ENCODE measurements at regions of chr2 and their contacts with region 1.

Region 1: GRCh38 chr2:230798769-230799399 is 65.9 kb upstream of the ITM2C start:
- DNase-seq: peak in 1 of 2 donors; percentile 80
- ATAC-seq: peak; percentile 30 to 48 (median 46)
- H3K4me3 ChIP-seq: no peak overlapping the region
- H3K4me3 Mint-ChIP-seq: no peak overlapping the region
- H3K27ac ChIP-seq: no peak overlapping the region
- H3K27ac Mint-ChIP-seq: no peak overlapping the region
- H3K4me1 ChIP-seq: peaks cover 18% of the 10 kb centered on the region
- H3K4me1 Mint-ChIP-seq: peaks cover 22 to 24% of the 10 kb centered on the region in 2 donors
- H3K27me3 ChIP-seq: no peaks in the 10 kb centered on the region
- H3K27me3 Mint-ChIP-seq: no peaks in the 10 kb centered on the region
- CTCF ChIP-seq: peak; percentile 78

Region 2: GRCh38 chr2:229943770-229944449 is 855.0 kb before region 1 on chr2:
- intact Hi-C with region 1: no loop called
- DNase-seq: no peak
- ATAC-seq: no peak
- H3K4me3 ChIP-seq: no peak overlapping the region
- H3K4me3 Mint-ChIP-seq: no peak overlapping the region
- H3K27ac ChIP-seq: no peak overlapping the region
- H3K27ac Mint-ChIP-seq: no peak overlapping the region
- H3K4me1 ChIP-seq: no peaks in the 10 kb centered on the region
- H3K4me1 Mint-ChIP-seq: no peaks in the 10 kb centered on the region
- H3K27me3 ChIP-seq: no peaks in the 10 kb centered on the region
- H3K27me3 Mint-ChIP-seq: no peaks in the 10 kb centered on the region
- CTCF ChIP-seq: no peak

Region 3: GRCh38 chr2:230602562-230603230 is 196.2 kb before region 1 on chr2:
- intact Hi-C with region 1: no loop called
- DNase-seq: peak in 1 of 2 donors; percentile 79
- ATAC-seq: peak; percentile 81 to 85 (median 83)
- H3K4me3 ChIP-seq: no peak overlapping the region
- H3K4me3 Mint-ChIP-seq: peak overlapping the region; percentile 67
- H3K27ac ChIP-seq: peak overlapping the region; percentile 84
- H3K27ac Mint-ChIP-seq: peak overlapping the region; percentile 82 to 90
- H3K4me1 ChIP-seq: peaks cover 39% of the 10 kb centered on the region
- H3K4me1 Mint-ChIP-seq: peaks cover 34 to 49% of the 10 kb centered on the region in 2 donors
- H3K27me3 ChIP-seq: no peaks in the 10 kb centered on the region
- H3K27me3 Mint-ChIP-seq: no peaks in the 10 kb centered on the region
- CTCF ChIP-seq: no peak

Region 4: DNA sequence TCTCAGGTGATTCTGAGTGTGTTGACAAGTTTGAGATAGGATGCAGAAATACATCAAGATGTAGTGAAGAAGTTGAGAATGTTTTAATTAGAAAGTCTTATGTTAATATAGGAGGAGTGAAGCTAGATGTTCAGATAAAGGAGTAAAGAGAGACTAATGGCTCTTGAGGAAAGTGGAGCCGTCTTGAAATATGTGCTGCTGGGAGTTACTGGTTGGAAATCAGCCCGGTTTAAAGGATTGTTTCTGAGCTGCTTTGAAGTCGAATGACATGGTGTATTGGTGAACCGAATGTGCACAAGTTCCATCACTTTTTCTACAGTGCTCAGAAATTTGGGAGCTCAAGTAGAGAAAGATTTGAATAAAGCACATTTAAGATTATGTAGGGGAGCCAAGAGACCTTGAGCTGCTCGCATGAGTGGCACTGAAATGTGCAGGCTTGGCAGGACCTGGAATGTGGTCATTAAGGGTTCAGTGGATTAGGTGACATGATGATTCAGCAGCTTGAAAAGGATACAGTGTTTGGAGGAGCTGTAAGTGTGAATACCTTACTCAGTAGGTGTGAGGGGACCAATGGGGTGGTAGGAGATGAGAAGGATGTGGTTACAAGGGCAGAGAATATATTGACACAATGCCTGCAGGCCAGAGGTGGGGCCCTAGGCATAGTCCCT is 17.6 kb before region 1 on chr2:
- intact Hi-C with region 1: loop called (anchors 1 kb)
- DNase-seq: peak; percentile 51 to 76
- ATAC-seq: peak; percentile 91 to 96 (median 93)
- H3K4me3 ChIP-seq: no peak overlapping the region
- H3K4me3 Mint-ChIP-seq: peak overlapping the region; percentile 67
- H3K27ac ChIP-seq: no peak overlapping the region
- H3K27ac Mint-ChIP-seq: peak overlapping the region; percentile 54 to 67
- H3K4me1 ChIP-seq: peaks cover 46% of the 10 kb centered on the region
- H3K4me1 Mint-ChIP-seq: peaks cover 69 to 82% of the 10 kb centered on the region in 2 donors
- H3K27me3 ChIP-seq: no peaks in the 10 kb centered on the region
- H3K27me3 Mint-ChIP-seq: no peaks in the 10 kb centered on the region
- CTCF ChIP-seq: no peak

Region 5: GRCh38 chr2:230847883-230848388 is 49.1 kb after region 1 on chr2:
- intact Hi-C with region 1: no loop called
- DNase-seq: peak; percentile 83 to 90
- ATAC-seq: peak; percentile 76 to 96 (median 95)
- H3K4me3 ChIP-seq: no peak overlapping the region
- H3K4me3 Mint-ChIP-seq: no peak overlapping the region
- H3K27ac ChIP-seq: no peak overlapping the region
- H3K27ac Mint-ChIP-seq: no peak overlapping the region
- H3K4me1 ChIP-seq: peaks cover 7% of the 10 kb centered on the region
- H3K4me1 Mint-ChIP-seq: peaks cover 10 to 13% of the 10 kb centered on the region in 2 donors
- H3K27me3 ChIP-seq: peaks cover 21% of the 10 kb centered on the region
- H3K27me3 Mint-ChIP-seq: peaks cover 56 to 83% of the 10 kb centered on the region in 2 donors
- CTCF ChIP-seq: peak; percentile 90